Sigmoid colon (tissue), 7 donors: ENCODE measurements at regions of chr17 and their contacts with region 1.

Region 1: DNA sequence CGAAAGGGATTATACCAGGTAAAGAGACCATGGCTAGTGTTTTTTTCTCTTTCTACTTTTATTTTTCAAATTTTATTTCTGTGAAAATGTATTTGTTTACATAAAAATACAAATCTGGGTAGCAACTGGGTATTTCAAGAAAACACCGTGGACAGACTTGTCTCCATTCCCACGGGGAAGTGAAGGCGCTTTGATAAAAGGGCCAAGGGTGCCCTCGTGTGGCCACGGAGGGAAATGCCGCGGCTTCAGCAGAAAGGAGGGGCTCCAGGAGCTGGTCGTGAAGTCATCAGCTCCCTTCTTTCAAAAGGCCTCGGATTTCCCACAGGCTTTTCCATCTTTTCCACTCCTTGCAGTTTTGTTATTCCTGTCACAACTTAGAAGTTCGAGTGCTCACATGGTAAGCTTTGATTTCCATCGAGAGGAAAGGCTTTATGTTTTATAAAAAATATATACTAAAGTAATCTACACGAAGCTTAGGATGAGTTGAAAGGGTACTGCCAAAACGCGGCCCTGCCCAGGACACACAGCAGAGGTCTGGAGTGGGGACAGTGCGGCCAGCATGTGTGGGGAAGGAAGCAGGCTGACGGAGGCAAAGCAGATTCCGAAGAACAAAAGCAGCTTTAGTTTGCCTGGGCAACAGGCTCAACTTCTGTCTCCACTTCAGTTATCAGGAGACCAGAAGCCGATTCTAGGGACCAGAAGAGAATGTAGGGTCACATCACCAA is 15.3 kb upstream of the MNT start:
- DNase-seq: peak; percentile 96
- H3K4me3 ChIP-seq: no peak overlapping the region
- H3K27ac ChIP-seq: peak overlapping the region; percentile 39 to 80 (median 61)
- H3K4me1 ChIP-seq: peaks cover 0 to 49% (median 25%) of the 10 kb centered on the region in 4 donors
- H3K27me3 ChIP-seq: no peaks in the 10 kb centered on the region
- CTCF ChIP-seq: peak; percentile 93 to 97 (median 95)
- EP300 ChIP-seq: no peak
- POLR2A ChIP-seq: no peak

Region 2: GRCh38 chr17:2309338-2310154 is 106.6 kb before region 1 on chr17:
- intact Hi-C with region 1: no loop called
- DNase-seq: no peak
- H3K4me3 ChIP-seq: no peak overlapping the region
- H3K27ac ChIP-seq: no peak overlapping the region
- H3K4me1 ChIP-seq: peaks cover 0 to under 1% (median 0%) of the 10 kb centered on the region in 4 donors
- H3K27me3 ChIP-seq: no peaks in the 10 kb centered on the region
- CTCF ChIP-seq: no peak
- EP300 ChIP-seq: no peak
- POLR2A ChIP-seq: no peak

Region 3: DNA sequence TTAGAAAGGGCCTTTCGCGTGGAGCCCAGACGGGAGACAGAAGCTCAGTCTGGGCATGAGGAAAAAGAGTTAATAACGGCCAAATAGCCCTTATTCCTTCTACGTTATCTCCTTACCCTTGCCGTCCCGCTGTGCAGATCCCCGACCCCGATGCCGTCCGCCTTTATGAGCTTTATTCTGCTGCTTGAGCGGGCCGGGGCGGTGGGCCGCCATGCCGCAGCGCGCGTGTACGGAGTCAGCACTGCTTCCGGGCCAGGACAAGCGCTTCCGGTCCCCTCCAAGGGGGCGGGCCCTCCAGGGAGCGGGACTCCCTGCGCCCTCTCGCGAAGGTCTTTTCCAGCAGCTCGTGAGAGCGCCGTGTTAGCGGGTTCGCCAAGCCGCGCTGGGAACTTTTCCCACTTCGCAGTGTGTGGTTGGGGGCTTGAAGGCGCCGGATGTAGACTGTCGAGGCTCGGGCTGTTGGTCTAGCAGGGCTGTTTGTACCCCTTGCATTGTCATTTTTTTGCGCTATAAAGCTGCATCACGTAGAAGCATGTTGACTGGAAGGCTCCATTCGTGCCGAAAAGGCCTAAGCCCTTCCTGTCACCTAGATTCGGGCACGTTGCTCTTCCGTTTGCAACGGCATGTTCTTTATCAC is 79.8 kb before region 1 on chr17 and contains the start of gene TSR1:
- intact Hi-C with region 1: loop called (anchors 10 kb)
- DNase-seq: peak; percentile 95
- H3K4me3 ChIP-seq: peak within 1 kb of the TSS; percentile 66 to 100 (median 96)
- H3K27ac ChIP-seq: peak within 1 kb of the TSS; percentile 89 to 97 (median 93)
- H3K4me1 ChIP-seq: peaks cover 0 to 33% (median 20%) of the 10 kb centered on the region in 4 donors
- H3K27me3 ChIP-seq: no peaks in the 10 kb centered on the region
- CTCF ChIP-seq: no peak
- EP300 ChIP-seq: no peak
- POLR2A ChIP-seq: peak; percentile 85 to 94
- total RNA-seq, gene TSR1: 21.9 to 56.3 (median 38.0) TPM

Region 4: GRCh38 chr17:2369551-2370210 is 46.5 kb before region 1 on chr17:
- intact Hi-C with region 1: loop called (anchors 10 kb)
- DNase-seq: no peak
- H3K4me3 ChIP-seq: no peak overlapping the region
- H3K27ac ChIP-seq: peak overlapping the region in 3 of 4 donors; percentile 29 to 61 (median 47)
- H3K4me1 ChIP-seq: peaks cover 0 to 34% (median 20%) of the 10 kb centered on the region in 4 donors
- H3K27me3 ChIP-seq: no peaks in the 10 kb centered on the region
- CTCF ChIP-seq: no peak
- EP300 ChIP-seq: no peak
- POLR2A ChIP-seq: no peak

Region 5: GRCh38 chr17:2386400-2387085 is 29.6 kb before region 1 on chr17:
- intact Hi-C with region 1: loop called (anchors 1 kb)
- DNase-seq: no peak
- H3K4me3 ChIP-seq: no peak overlapping the region
- H3K27ac ChIP-seq: peak overlapping the region in 1 of 4 donors; percentile 15
- H3K4me1 ChIP-seq: peaks cover 0 to 49% (median 44%) of the 10 kb centered on the region in 4 donors
- H3K27me3 ChIP-seq: no peaks in the 10 kb centered on the region
- CTCF ChIP-seq: no peak
- EP300 ChIP-seq: no peak
- POLR2A ChIP-seq: no peak

Region 6: GRCh38 chr17:2442166-2442565 is 26.0 kb after region 1 on chr17:
- intact Hi-C with region 1: no loop called
- DNase-seq: no peak
- H3K4me3 ChIP-seq: no peak overlapping the region
- H3K27ac ChIP-seq: no peak overlapping the region
- H3K4me1 ChIP-seq: no peaks in the 10 kb centered on the region
- H3K27me3 ChIP-seq: no peaks in the 10 kb centered on the region
- CTCF ChIP-seq: no peak
- EP300 ChIP-seq: no peak
- POLR2A ChIP-seq: no peak